K562 (cell line): ENCODE measurements at regions of chr3 and their contacts with region 1.

Region 1: DNA sequence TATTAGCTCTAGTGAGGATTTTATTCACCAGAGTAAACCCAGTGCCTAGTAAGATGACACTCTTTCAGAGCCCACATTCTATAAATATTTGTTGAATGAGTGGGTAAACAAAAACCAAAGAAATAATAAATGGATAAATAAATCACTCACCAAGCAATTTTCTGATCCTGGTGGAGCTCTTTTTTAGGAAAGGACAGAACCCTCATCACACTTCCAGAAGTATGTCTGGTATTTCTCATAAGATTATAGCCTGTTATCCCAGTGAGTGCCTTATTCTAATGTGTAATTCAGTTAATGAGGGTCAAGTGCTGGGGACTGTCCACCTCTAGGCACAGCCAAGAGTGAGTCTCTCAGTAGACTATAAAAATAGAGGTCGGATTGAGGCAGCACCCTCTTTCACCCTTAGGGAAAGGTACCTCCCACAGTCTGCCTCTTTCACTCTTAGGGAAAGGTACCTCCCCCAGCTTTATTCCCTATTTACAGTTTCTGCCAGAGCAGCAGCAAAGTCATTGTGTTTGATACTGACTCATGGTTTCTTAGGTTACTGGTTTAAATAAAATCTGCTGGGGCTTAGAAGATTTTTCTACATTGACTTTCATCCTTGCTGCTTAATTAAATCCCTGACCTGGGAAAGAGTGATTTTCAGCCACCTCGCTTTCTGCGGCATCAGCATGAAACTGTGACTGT is 145.0 kb downstream of the STAC start:
- DNase-seq: no peak
- ATAC-seq: no peak
- H3K4me3 ChIP-seq: no peak overlapping the region
- H3K27ac ChIP-seq: no peak overlapping the region
- H3K4me1 ChIP-seq: no peaks in the 10 kb centered on the region
- H3K27me3 ChIP-seq: no peaks in the 10 kb centered on the region
- CTCF ChIP-seq: no peak
- EP300 ChIP-seq: no peak
- POLR2A ChIP-seq: no peak
- RAD21 ChIP-seq: no peak

Region 2: GRCh38 chr3:36461597-36461996 is 63.7 kb before region 1 on chr3:
- CTCF ChIA-PET with region 1: no interaction called
- POLR2A ChIA-PET with region 1: no interaction called
- in situ Hi-C with region 1: no loop called
- intact Hi-C with region 1: loop called (anchors 10 kb)
- DNase-seq: no peak
- ATAC-seq: no peak
- H3K4me3 ChIP-seq: no peak overlapping the region
- H3K27ac ChIP-seq: no peak overlapping the region
- H3K4me1 ChIP-seq: no peaks in the 10 kb centered on the region
- H3K27me3 ChIP-seq: no peaks in the 10 kb centered on the region
- CTCF ChIP-seq: no peak
- EP300 ChIP-seq: no peak
- POLR2A ChIP-seq: no peak
- RAD21 ChIP-seq: no peak